ENCODE measurements at regions of chr1 and their contacts with region 1.

Region 1: DNA sequence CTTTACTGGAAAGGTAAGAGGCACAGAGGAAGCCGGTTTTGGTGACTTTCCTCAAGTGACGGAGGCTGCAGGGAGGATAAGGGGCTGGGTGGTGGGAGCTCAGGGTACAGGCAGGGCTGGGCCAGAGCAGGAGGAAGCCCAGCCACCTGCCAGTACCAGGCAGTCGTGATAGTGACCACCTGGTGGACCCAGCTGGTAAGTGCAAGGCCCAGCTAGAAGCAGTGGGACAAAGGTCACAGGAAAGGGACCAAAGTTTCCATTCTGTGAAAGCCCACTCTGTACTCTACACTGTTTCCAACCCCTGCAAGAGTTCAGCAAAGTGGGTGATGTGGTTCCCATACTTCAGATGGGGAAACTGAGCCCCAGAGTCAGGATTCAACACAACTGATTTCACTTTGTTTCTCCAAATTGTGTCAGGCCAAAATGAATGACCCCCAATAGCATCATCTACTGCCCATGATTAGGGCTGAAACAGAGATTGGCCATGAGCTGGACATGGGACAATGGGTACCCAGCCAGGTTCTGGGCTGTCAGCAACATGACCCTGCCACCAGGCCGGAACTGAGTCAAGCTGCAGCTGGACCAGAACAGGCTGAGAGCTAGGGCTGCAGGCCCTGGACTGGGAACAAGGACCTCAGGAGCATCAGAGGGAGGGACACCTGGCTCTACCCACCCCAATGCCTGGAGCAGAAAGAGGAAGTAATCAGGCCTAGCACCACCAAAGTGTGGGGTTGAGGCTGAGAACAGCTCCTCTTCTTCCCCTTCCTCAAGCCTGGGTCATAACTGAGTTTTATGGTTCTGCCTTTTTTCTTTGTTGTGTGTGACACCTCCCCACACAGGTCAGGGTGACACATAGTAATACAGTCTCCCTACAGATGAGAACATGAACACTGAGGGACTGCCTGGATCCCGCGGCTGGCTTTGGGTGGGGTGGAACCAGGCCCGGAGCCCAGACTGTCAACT is 50.2 kb downstream of the KCNN3 start:
- DNase-seq: peak; percentile 66
- ATAC-seq: peak; percentile 97
- H3K4me3 Mint-ChIP-seq: no peak overlapping the region
- H3K27ac Mint-ChIP-seq: no peak overlapping the region
- H3K4me1 Mint-ChIP-seq: peaks cover 13% of the 10 kb centered on the region
- H3K27me3 Mint-ChIP-seq: no peaks in the 10 kb centered on the region
- CTCF ChIP-seq: peak; percentile 63

Region 2: DNA sequence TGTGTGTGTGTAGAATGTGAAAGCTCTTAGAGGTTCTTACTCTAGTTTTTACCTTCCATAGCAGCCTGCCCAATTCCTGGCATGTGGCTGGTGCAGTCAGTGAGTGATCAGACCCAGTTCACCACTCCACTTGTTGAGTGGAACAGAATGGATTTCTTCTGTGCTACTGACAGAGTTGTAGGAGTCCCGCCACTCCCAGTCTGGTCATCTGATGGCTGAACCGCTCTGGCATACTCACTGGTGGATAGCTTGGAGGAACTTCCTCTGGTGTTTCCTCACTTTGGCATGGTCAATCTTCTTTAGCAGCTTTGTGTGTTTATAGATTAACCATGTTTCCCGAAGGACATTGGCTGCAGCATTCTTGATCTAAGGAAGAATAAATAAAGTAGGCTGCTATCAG is 105.3 kb before region 1 on chr1:
- CTCF ChIA-PET with region 1: no interaction called
- POLR2A ChIA-PET with region 1: no interaction called
- DNase-seq: no peak
- ATAC-seq: no peak; the same call in none of the 2 replicates
- H3K4me3 Mint-ChIP-seq: no peak overlapping the region
- H3K27ac Mint-ChIP-seq: no peak overlapping the region
- H3K4me1 Mint-ChIP-seq: 0 out of 2 replicates have a peak, but pooled peaks cover 3% of the 10 kb centered on the region
- H3K27me3 Mint-ChIP-seq: no peaks in the 10 kb centered on the region
- CTCF ChIP-seq: no peak

Region 3: DNA sequence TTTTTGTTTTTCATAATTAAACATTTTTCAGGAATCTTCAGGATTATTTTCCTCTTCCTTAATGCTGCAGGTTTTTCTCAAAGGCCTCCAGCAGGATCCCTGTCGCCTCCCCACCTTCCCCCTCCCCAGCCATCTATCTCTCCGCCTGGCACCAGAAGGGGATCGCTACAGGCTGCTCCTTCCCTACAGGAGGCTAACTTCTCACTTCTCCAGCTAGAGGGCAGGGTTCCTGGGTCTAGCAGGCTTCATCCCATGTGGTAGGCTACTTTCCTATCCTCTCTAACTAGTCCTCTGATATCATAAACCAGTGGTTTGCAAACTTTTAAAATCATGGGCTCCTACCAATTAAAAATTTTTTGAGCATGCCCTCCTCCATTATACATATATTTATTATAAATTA is 53.9 kb before region 1 on chr1:
- CTCF ChIA-PET with region 1: interaction called, 13 read pairs
- POLR2A ChIA-PET with region 1: no interaction called
- DNase-seq: peak; percentile 59
- ATAC-seq: peak; percentile 97
- H3K4me3 Mint-ChIP-seq: no peak overlapping the region
- H3K27ac Mint-ChIP-seq: no peak overlapping the region
- H3K4me1 Mint-ChIP-seq: no peaks in the 10 kb centered on the region
- H3K27me3 Mint-ChIP-seq: peaks cover 4% of the 10 kb centered on the region
- CTCF ChIP-seq: no peak

Region 4: GRCh38 chr1:155022927-155023236 is 203.0 kb after region 1 on chr1:
- CTCF ChIA-PET with region 1: no interaction called
- POLR2A ChIA-PET with region 1: no interaction called
- DNase-seq: no peak
- ATAC-seq: no peak
- H3K4me3 Mint-ChIP-seq: no peak overlapping the region
- H3K27ac Mint-ChIP-seq: no peak overlapping the region
- H3K4me1 Mint-ChIP-seq: peaks cover 21% of the 10 kb centered on the region
- H3K27me3 Mint-ChIP-seq: peaks cover 4% of the 10 kb centered on the region; the same call in 1 of the 2 replicates
- CTCF ChIP-seq: no peak